ENCODE measurements at regions of chr5 and their contacts with region 1.

Region 1: GRCh38 chr5:96279801-96280542 is 153.1 kb downstream of the PCSK1 start:
- DNase-seq: no peak
- H3K4me3 Mint-ChIP-seq: peak overlapping the region; percentile 53
- H3K27ac Mint-ChIP-seq: peak overlapping the region; percentile 77
- H3K4me1 Mint-ChIP-seq: peaks cover 22% of the 10 kb centered on the region
- H3K27me3 Mint-ChIP-seq: peaks cover 6% of the 10 kb centered on the region

Region 2: DNA sequence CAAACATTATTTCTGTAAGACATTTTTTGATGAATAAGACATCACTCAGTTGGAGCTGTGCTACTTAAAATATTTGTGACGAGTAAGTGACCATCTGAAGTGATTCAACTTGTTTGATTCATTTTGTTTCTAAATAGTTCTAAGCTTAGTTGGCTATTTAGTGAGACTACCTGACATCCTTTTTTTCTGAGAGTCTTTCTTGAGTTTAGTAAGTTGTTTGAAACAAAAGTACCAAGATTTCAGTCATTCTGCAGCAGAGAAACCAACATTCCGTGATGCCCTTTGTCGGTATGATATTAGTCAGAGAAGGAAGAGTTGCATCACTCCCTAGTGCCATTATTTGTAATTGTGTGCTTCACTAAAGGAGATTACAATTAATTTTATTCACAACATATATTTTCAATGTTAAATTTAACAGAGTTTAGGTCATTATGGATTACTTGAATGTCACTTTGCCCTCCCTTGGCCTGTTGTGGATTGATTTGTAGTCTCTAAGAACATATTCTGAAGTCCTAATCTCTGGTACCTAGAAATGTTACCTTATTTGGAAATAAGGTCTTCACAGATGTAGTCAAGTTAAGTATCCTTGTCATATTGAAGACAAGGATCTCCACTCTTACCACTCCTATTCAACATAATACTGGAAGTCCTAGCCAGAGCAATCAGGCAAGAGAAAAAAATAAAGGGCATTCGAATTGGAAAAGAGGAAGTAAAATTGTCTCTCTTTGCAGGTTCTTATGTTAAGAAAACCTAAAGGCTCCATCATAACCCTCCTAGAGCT is 59.2 kb before region 1 on chr5:
- intact Hi-C with region 1: loop called (anchors 2 kb)
- DNase-seq: no peak
- H3K4me3 Mint-ChIP-seq: no peak overlapping the region
- H3K27ac Mint-ChIP-seq: peak overlapping the region; percentile 60
- H3K4me1 Mint-ChIP-seq: peaks cover 2% of the 10 kb centered on the region
- H3K27me3 Mint-ChIP-seq: no peaks in the 10 kb centered on the region

Region 3: GRCh38 chr5:96257904-96258303 is 22.1 kb before region 1 on chr5:
- intact Hi-C with region 1: loop called (anchors 1 kb)
- DNase-seq: no peak
- H3K4me3 Mint-ChIP-seq: no peak overlapping the region
- H3K27ac Mint-ChIP-seq: no peak overlapping the region
- H3K4me1 Mint-ChIP-seq: peaks cover 3% of the 10 kb centered on the region
- H3K27me3 Mint-ChIP-seq: peaks cover 2% of the 10 kb centered on the region